Prostate gland (tissue), 2 donors: ENCODE measurements at regions of chr4 and their contacts with region 1.

Region 1: DNA sequence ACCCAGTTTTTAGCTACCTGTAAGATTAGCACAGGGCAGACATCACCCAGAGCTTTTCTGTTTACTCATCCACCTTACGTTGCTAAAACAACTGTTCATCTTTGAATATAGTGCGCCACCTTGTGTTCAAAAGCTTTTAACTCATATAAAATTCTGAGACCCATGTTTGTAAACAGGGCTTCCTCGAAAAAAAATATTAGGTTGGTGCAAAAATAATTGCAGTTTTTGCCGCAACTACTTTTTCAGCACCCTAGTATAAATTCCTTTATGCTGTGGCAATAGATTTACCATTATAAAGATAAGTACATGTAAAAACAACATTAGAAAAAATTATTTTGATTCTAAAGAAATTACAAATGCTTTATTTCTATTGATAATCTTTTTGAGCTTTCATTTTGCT is 147.9 kb downstream of the LRBA start:
- DNase-seq: peak; percentile 74
- H3K4me3 ChIP-seq: no peak overlapping the region
- H3K27ac ChIP-seq: no peak overlapping the region
- H3K4me1 ChIP-seq: no peaks in the 10 kb centered on the region
- H3K27me3 ChIP-seq: no peaks in the 10 kb centered on the region
- CTCF ChIP-seq: peak; percentile 26 to 75 (median 73)
- POLR2A ChIP-seq: no peak

Region 2: DNA sequence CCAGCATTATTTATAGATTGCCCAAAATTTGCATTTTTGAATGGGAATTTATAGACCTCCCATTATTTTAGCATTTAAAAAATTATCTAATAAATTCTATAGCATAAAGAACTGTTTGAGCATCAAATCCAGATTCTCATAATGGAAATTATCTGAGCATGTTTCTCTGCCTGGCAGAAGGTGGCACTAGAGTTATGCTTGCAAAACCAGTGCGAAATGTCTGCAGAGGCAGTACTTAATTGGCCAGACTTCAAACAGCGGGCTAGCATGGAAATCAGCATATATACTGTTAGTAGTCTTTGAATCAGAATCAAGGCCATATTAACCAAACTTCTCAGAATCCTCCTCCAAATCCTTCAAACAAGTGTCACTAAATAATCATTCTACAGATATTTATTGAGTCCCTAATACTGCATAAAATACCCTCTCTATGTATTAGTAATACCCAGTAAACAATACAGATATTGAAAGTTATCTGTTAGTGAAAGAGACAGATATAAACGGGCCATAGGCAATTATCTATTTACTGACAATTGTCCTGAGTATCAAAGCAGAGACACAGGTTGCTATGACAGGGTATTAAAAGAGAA is 867.6 kb before region 1 on chr4:
- intact Hi-C with region 1: loop called (anchors 10 kb)
- DNase-seq: no peak
- H3K4me3 ChIP-seq: no peak overlapping the region
- H3K27ac ChIP-seq: no peak overlapping the region
- H3K4me1 ChIP-seq: no peaks in the 10 kb centered on the region
- H3K27me3 ChIP-seq: no peaks in the 10 kb centered on the region
- CTCF ChIP-seq: peak in 3 of 4 experiments; percentile 19 to 54 (median 53)
- POLR2A ChIP-seq: no peak

Region 3: GRCh38 chr4:150297861-150298474 is 569.2 kb before region 1 on chr4:
- intact Hi-C with region 1: loop called (anchors 5 kb)
- DNase-seq: peak; percentile 25
- H3K4me3 ChIP-seq: no peak overlapping the region
- H3K27ac ChIP-seq: no peak overlapping the region
- H3K4me1 ChIP-seq: no peaks in the 10 kb centered on the region
- H3K27me3 ChIP-seq: no peaks in the 10 kb centered on the region
- CTCF ChIP-seq: peak; percentile 25 to 65 (median 57)
- POLR2A ChIP-seq: no peak